ENCODE measurements at regions of chr6 and their contacts with region 1.

Region 1: DNA sequence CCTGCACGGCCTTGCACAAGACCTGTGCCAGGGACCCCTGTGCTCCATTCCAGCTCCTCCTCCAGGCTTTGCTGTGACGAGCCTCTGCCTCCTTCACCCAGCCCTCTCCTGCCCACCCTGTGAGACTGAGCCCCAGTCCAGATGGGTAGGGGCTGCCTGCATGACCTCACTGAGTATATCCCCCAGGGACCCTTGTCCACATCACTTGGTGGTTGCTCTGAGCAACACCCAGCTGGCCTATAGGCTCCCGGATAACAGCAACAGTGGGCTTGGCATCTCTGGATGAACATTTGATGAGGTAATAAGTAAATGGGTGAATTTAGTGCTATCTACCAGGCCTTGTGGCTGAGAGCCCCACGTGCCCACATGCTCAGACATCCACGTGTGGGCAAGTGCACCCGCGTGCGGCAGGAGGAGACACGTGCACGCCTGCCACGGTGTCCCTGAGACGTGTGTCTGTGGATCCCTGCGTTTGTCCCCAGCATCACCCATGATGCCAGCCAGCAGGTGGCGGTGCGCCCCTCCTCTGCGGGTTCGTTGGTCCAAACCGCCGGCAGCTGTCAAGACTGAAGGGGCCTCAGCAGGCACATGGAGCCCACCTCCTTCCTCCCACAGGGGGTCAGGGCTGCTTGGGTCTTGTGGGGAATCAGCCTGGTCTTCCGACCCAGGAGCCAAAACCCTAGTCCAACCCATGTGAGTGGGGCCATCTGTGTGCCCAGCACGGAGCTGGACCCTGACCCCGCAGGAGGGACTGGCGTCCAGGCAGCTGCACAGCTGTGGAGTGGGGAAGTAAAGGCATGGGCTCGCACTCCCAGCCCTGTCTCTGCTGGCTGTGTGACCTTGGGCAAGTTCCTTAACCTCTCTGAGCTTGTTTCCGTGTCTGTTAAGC is 45.9 kb downstream of the FGD2 start:
- DNase-seq: peak; percentile 47 to 98
- H3K4me3 ChIP-seq: no peak overlapping the region
- H3K27ac ChIP-seq: no peak overlapping the region
- H3K4me1 ChIP-seq: peaks cover 0 to 22% (median 17%) of the 10 kb centered on the region in 4 experiments; a peak in 6 of 7 replicates
- H3K27me3 ChIP-seq: no peaks in the 10 kb centered on the region
- CTCF ChIP-seq: peak in 2 of 3 experiments; percentile 97; a peak in 3 of 4 replicates
- EP300 ChIP-seq: 0 out of 3 replicates have a peak, but pooled peaks of 1 of the 2 experiments have one; percentile 24
- POLR2A ChIP-seq: no peak
- RAD21 ChIP-seq: peak; percentile 97 to 98

Region 2: DNA sequence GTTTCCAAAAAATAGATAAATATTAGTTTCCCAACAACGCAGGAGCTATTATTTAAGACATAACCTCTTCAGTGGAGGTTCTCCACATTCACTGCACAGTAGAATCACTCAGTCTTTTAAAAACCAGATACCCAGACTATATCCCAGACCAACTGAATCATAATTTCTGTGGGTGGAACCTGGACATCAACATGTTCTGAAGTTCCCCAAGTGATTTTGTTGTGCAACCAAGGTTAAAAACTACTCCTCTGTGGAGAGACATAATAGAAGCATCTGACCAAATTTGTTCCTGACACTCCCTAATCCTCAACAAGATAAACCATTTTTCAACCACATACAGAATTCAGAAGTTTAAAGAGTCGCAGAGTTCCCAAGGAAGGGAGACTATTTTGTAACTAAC is 546.4 kb before region 1 on chr6:
- CTCF ChIA-PET with region 1: no interaction called
- POLR2A ChIA-PET with region 1: no interaction called
- DNase-seq: no peak
- H3K4me3 ChIP-seq: no peak overlapping the region
- H3K27ac ChIP-seq: no peak overlapping the region
- H3K4me1 ChIP-seq: no peaks in the 10 kb centered on the region
- H3K27me3 ChIP-seq: no peaks in the 10 kb centered on the region
- CTCF ChIP-seq: no peak
- EP300 ChIP-seq: no peak
- POLR2A ChIP-seq: no peak
- RAD21 ChIP-seq: no peak

Region 3: DNA sequence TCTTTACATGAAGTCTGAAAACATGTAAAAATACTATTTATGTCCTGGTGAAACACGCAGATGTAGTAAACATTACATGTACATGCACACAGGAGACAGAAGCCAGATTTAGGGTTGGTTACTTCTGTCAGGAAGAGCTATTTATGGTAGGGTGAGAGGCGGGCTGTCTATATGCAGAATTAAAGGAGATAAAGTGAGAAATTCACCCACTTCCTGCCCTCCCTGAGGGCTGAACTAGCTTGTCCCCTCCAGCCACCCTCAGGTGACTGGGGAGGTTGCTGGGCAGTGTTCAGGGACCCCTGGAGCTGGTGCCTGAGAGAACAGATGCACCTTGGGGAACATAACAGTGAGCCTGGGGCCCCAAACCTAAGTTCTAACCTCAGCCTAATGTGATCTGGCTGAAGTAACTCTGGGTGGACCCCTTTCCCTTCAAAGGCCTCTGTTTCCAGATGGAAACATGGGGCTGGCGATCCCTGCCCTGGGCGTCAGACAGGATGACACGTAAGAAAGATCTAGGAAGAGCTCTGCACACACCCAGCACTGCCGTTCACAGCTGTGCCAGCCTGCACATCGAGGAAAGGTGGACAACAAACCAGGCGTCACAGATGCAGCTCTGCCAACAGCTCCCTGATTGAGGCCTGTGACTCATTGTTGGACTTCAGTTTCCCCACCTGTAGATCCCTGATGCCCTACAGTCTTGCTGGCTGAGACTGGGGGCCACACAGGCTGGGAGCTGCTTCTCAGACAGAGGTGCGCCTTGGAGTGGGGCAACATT is 95.5 kb before region 1 on chr6:
- CTCF ChIA-PET with region 1: no interaction called
- POLR2A ChIA-PET with region 1: no interaction called
- DNase-seq: no peak
- H3K4me3 ChIP-seq: no peak overlapping the region
- H3K27ac ChIP-seq: no peak overlapping the region
- H3K4me1 ChIP-seq: no peaks in the 10 kb centered on the region; a peak in 1 of 7 replicates
- H3K27me3 ChIP-seq: no peaks in the 10 kb centered on the region
- CTCF ChIP-seq: no peak
- EP300 ChIP-seq: no peak
- POLR2A ChIP-seq: no peak
- RAD21 ChIP-seq: no peak

Region 4: DNA sequence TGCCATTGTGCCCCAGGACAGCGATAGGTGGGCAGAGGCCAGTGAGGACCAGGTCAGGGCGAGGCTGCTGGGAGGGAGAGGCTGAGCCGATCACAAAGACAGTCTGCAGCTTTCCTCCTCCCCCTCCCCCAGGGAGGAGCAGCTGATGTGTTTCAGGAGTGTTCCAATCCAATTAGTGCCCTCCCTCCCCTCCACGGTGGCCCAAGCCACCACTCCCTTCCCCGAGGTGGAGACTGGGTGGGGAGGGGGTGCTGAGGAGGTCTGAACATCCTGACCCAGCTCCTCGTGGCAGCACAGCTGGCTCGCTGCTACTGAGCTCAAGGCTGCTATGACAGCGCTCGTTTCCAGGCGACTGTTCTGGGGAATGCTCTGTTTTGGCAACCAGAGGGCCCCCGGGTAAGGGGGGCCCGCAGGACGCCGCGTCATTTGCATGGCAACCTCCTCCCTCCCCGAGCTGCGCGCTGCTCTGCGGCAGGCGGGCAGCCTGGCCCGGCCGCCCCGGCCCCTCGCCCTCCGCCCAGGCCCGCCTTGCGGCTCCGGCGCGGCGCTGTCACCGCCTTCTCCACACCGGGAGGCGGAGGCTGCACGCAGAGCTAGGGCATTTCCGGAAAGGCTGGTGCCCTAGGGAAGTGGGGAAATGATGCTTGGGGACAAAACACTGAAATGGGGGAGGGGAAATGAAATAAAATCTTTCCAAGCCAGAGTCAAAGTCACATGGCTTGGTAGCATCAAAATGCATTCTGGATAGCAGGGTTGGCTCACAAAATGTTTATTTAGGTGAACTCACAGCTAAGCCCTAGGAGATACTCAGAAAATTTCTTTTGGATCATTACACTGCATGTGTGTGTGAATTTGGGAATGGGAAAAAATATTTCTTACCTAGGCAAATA is 51.1 kb after region 1 on chr6:
- CTCF ChIA-PET with region 1: interaction called, 32 read pairs
- POLR2A ChIA-PET with region 1: interaction called, 80 read pairs
- DNase-seq: peak; percentile 73 to 87
- H3K4me3 ChIP-seq: peak overlapping the region; percentile 18 to 53 (median 47); a peak in 7 of 8 replicates
- H3K27ac ChIP-seq: peak overlapping the region; percentile 81
- H3K4me1 ChIP-seq: peaks cover 23 to 33% (median 28%) of the 10 kb centered on the region in 4 experiments
- H3K27me3 ChIP-seq: no peaks in the 10 kb centered on the region
- CTCF ChIP-seq: peak in 1 of 3 experiments; percentile 2; a peak in 1 of 4 replicates
- EP300 ChIP-seq: peak; percentile 46 to 91; a peak in 2 of 3 replicates
- POLR2A ChIP-seq: peak; percentile 22 to 50
- RAD21 ChIP-seq: peak in 1 of 2 experiments; percentile 14; a peak in 1 of 4 replicates

Region 5: DNA sequence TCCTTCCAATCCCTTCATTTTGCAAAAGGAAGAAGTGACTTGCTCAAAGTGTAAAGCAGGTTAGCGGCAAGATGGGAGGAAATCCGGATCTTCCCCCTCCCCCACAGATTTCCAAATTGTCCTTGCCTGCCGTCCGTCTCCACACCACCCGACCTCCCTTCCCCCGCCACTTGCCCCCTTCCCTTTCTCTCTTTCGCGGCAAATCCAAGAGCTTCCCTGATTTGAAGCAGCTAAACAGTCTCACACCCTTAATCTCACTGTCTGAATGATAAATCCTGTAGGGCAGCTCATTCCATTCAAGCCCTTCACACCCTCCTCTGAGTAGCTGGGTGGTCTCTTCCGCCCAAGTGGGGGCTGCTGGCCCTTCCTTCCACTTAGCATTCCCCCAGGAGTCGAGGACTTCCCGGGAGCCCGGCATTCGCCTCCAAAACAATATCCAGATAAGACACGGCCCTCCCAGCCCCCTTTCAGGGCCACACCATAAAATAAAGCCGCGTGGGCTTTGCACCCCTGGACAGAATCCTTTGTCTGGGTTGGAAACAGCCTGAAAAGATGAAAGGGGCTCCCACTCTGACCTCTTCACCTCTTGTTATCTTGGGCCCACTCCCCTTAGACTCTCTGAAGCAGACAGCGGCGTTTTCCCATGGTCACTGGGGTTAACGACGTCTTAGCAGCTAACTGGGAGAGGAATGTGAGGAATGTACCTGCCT is 74.6 kb after region 1 on chr6:
- CTCF ChIA-PET with region 1: interaction called, 18 read pairs
- POLR2A ChIA-PET with region 1: interaction called, 12 read pairs
- DNase-seq: peak; percentile 74 to 81
- H3K4me3 ChIP-seq: peak overlapping the region; percentile 12 to 58 (median 39); a peak in 7 of 8 replicates
- H3K27ac ChIP-seq: peak overlapping the region; percentile 94
- H3K4me1 ChIP-seq: peaks cover 19 to 42% (median 31%) of the 10 kb centered on the region in 4 experiments
- H3K27me3 ChIP-seq: no peaks in the 10 kb centered on the region
- CTCF ChIP-seq: no peak
- EP300 ChIP-seq: peak in 1 of 2 experiments; percentile 26; a peak in 1 of 3 replicates
- POLR2A ChIP-seq: peak in 1 of 2 experiments; percentile 53; a peak in 2 of 3 replicates
- RAD21 ChIP-seq: peak in 1 of 2 experiments; percentile 0; a peak in 1 of 4 replicates

Region 6: GRCh38 chr6:37137201-37138090 is 86.1 kb after region 1 on chr6:
- CTCF ChIA-PET with region 1: interaction called, 25 read pairs
- POLR2A ChIA-PET with region 1: interaction called, 36 read pairs
- DNase-seq: peak; percentile 77 to 93
- H3K4me3 ChIP-seq: peak overlapping the region; percentile 49 to 90 (median 87)
- H3K27ac ChIP-seq: peak overlapping the region; percentile 98
- H3K4me1 ChIP-seq: peaks cover 15 to 37% (median 28%) of the 10 kb centered on the region in 4 experiments
- H3K27me3 ChIP-seq: no peaks in the 10 kb centered on the region
- CTCF ChIP-seq: no peak
- EP300 ChIP-seq: peak; percentile 29 to 86; a peak in 2 of 3 replicates
- POLR2A ChIP-seq: peak in 1 of 2 experiments; percentile 95; a peak in 2 of 3 replicates
- RAD21 ChIP-seq: peak; percentile 18 to 28; a peak in 2 of 4 replicates

Region 7: GRCh38 chr6:37169496-37170272 is 118.3 kb after region 1 on chr6 and contains the start of gene PIM1:
- CTCF ChIA-PET with region 1: interaction called, 82 read pairs
- POLR2A ChIA-PET with region 1: interaction called, 82 read pairs
- DNase-seq: peak; percentile 92 to 93
- H3K4me3 ChIP-seq: peak within 1 kb of the TSS; percentile 92 to 99 (median 94)
- H3K27ac ChIP-seq: peak within 1 kb of the TSS; percentile 97
- H3K4me1 ChIP-seq: peaks cover 6 to 14% (median 10%) of the 10 kb centered on the region in 4 experiments; a peak in 5 of 7 replicates
- H3K27me3 ChIP-seq: no peaks in the 10 kb centered on the region
- CTCF ChIP-seq: no peak
- EP300 ChIP-seq: peak in 1 of 2 experiments; percentile 54; a peak in 1 of 3 replicates
- POLR2A ChIP-seq: peak in 1 of 2 experiments; percentile 65
- RAD21 ChIP-seq: no peak
- total RNA-seq, gene PIM1: 94.1 and 94.9 TPM in 2 replicates

Region 8: GRCh38 chr6:37190159-37190535 is 138.8 kb after region 1 on chr6:
- CTCF ChIA-PET with region 1: interaction called, 15 read pairs
- POLR2A ChIA-PET with region 1: no interaction called
- DNase-seq: no peak
- H3K4me3 ChIP-seq: no peak overlapping the region
- H3K27ac ChIP-seq: no peak overlapping the region
- H3K4me1 ChIP-seq: no peaks in the 10 kb centered on the region; a peak in 2 of 7 replicates
- H3K27me3 ChIP-seq: no peaks in the 10 kb centered on the region
- CTCF ChIP-seq: no peak
- EP300 ChIP-seq: no peak
- POLR2A ChIP-seq: no peak
- RAD21 ChIP-seq: no peak

Measured in H1 (cell line).